Thyroid gland (tissue), 4 donors: ENCODE measurements at regions of chr1 and their contacts with region 1.

Region 1: GRCh38 chr1:202858331-202858730 is 30.6 kb downstream of the RABIF start:
- DNase-seq: peak; percentile 8 to 36
- H3K4me3 ChIP-seq: no peak overlapping the region
- H3K27ac ChIP-seq: no peak overlapping the region
- H3K4me1 ChIP-seq: peaks cover 0 to 17% of the 10 kb centered on the region in 2 donors
- H3K27me3 ChIP-seq: no peaks in the 10 kb centered on the region
- CTCF ChIP-seq: no peak
- POLR2A ChIP-seq: no peak

Region 2: GRCh38 chr1:202810615-202811295 is 47.6 kb before region 1 on chr1 and contains the start of gene PCAT6:
- intact Hi-C with region 1: loop called (anchors 5 kb)
- DNase-seq: peak; percentile 95
- H3K4me3 ChIP-seq: peak within 1 kb of the TSS; percentile 51 to 63 (median 56)
- H3K27ac ChIP-seq: peak within 1 kb of the TSS; percentile 52 to 69 (median 54)
- H3K4me1 ChIP-seq: peaks cover 9 to 14% of the 10 kb centered on the region in 2 donors
- H3K27me3 ChIP-seq: no peaks in the 10 kb centered on the region
- CTCF ChIP-seq: no peak
- POLR2A ChIP-seq: peak; percentile 26 to 94
- total RNA-seq, gene PCAT6: not detected